CD8-positive, alpha-beta memory T cell (primary cell): ENCODE measurements at regions of chr14 and their contacts with region 1.

Region 1: GRCh38 chr14:106518054-106518943 is 991.9 kb downstream of the TMEM121 start:
- DNase-seq: peak; percentile 70 to 88 (median 80)
- H3K4me3 ChIP-seq: no peak overlapping the region
- H3K4me3 Mint-ChIP-seq: peak overlapping the region in 1 of 7 donors; percentile 15
- H3K27ac ChIP-seq: no peak overlapping the region
- H3K27ac Mint-ChIP-seq: peak overlapping the region in 1 of 8 donors; percentile 3
- H3K4me1 ChIP-seq: peaks cover 18% of the 10 kb centered on the region
- H3K4me1 Mint-ChIP-seq: peaks cover 14 to 20% (median 20%) of the 10 kb centered on the region in 3 donors
- H3K27me3 ChIP-seq: no peaks in the 10 kb centered on the region
- H3K27me3 Mint-ChIP-seq: peaks cover 7 to 21% of the 10 kb centered on the region in 2 donors

Region 2: GRCh38 chr14:106436310-106436905 is 81.9 kb before region 1 on chr14:
- CTCF ChIA-PET with region 1: interaction called, 13 read pairs
- POLR2A ChIA-PET with region 1: no interaction called
- DNase-seq: peak; percentile 48 to 68 (median 59)
- H3K4me3 ChIP-seq: no peak overlapping the region
- H3K4me3 Mint-ChIP-seq: no peak overlapping the region
- H3K27ac ChIP-seq: no peak overlapping the region
- H3K27ac Mint-ChIP-seq: no peak overlapping the region
- H3K4me1 ChIP-seq: no peaks in the 10 kb centered on the region
- H3K4me1 Mint-ChIP-seq: peaks cover 0 to 2% (median 0%) of the 10 kb centered on the region in 3 donors
- H3K27me3 ChIP-seq: no peaks in the 10 kb centered on the region
- H3K27me3 Mint-ChIP-seq: peaks cover 13 to 17% of the 10 kb centered on the region in 2 donors

Region 3: GRCh38 chr14:106631879-106632278 is 113.6 kb after region 1 on chr14:
- CTCF ChIA-PET with region 1: no interaction called
- POLR2A ChIA-PET with region 1: no interaction called
- DNase-seq: no peak
- H3K4me3 ChIP-seq: no peak overlapping the region
- H3K4me3 Mint-ChIP-seq: no peak overlapping the region
- H3K27ac ChIP-seq: no peak overlapping the region
- H3K27ac Mint-ChIP-seq: no peak overlapping the region
- H3K4me1 ChIP-seq: no peaks in the 10 kb centered on the region
- H3K4me1 Mint-ChIP-seq: peaks cover 0 to 3% (median 0%) of the 10 kb centered on the region in 3 donors
- H3K27me3 ChIP-seq: no peaks in the 10 kb centered on the region
- H3K27me3 Mint-ChIP-seq: peaks cover 21 to 48% of the 10 kb centered on the region in 2 donors